Heart right ventricle (tissue), 16 donors: ENCODE measurements at regions of chr7 and their contacts with region 1.

Region 1: DNA sequence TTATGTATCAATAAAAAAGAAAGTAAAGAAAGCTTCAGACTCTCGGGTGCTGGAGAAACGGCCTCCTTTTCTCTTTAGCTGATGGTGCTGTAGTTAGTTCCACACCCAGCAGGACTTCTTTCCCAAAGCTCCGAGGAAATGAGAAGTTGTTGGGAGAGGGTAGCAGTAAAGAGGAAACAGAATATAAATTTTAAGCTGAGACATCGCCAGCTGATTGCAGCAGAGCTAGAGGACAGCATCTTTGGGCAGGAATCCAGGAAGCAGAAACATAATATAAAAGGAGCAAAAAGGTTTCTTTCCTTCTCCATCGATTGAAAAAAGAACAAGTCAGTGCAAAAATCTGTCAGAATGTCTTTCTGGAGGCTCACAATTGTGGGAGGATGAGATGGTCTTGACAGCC is 616.9 kb upstream of the FOXK1 start:
- DNase-seq: no peak
- ATAC-seq: no peak
- H3K4me3 ChIP-seq: no peak overlapping the region
- H3K27ac ChIP-seq: no peak overlapping the region
- H3K4me1 ChIP-seq: no peaks in the 10 kb centered on the region
- H3K27me3 ChIP-seq: peaks cover 0 to 2% (median 0%) of the 10 kb centered on the region in 7 donors
- CTCF ChIP-seq: no peak

Region 2: GRCh38 chr7:5172196-5172775 is 1107.1 kb after region 1 on chr7:
- intact Hi-C with region 1: loop called in 1 of 10 experiments (anchors 5 kb)
- DNase-seq: no peak
- ATAC-seq: no peak
- H3K4me3 ChIP-seq: no peak overlapping the region
- H3K27ac ChIP-seq: no peak overlapping the region
- H3K4me1 ChIP-seq: peaks cover 0 to 7% (median under 1%) of the 10 kb centered on the region in 9 donors
- H3K27me3 ChIP-seq: peaks cover 0 to 9% (median 0%) of the 10 kb centered on the region in 7 donors
- CTCF ChIP-seq: no peak